Breast epithelium (tissue), 4 donors: ENCODE measurements at regions of chr6 and their contacts with region 1.

Region 1: GRCh38 chr6:15483060-15483459 is 179.8 kb downstream of the DTNBP1 start:
- DNase-seq: no peak
- H3K4me3 ChIP-seq: no peak overlapping the region
- H3K27ac ChIP-seq: no peak overlapping the region
- H3K4me1 ChIP-seq: no peaks in the 10 kb centered on the region
- H3K27me3 ChIP-seq: no peaks in the 10 kb centered on the region
- CTCF ChIP-seq: no peak
- POLR2A ChIP-seq: no peak

Region 2: GRCh38 chr6:15420959-15421438 is 62.1 kb before region 1 on chr6:
- intact Hi-C with region 1: no loop called
- DNase-seq: no peak
- H3K4me3 ChIP-seq: no peak overlapping the region
- H3K27ac ChIP-seq: no peak overlapping the region
- H3K4me1 ChIP-seq: no peaks in the 10 kb centered on the region
- H3K27me3 ChIP-seq: no peaks in the 10 kb centered on the region
- CTCF ChIP-seq: no peak
- POLR2A ChIP-seq: no peak

Region 3: GRCh38 chr6:15493437-15494168 is 10.5 kb after region 1 on chr6:
- intact Hi-C with region 1: loop called (anchors 1 kb)
- DNase-seq: no peak
- H3K4me3 ChIP-seq: no peak overlapping the region
- H3K27ac ChIP-seq: no peak overlapping the region
- H3K4me1 ChIP-seq: peaks cover 0 to 2% of the 10 kb centered on the region in 2 donors
- H3K27me3 ChIP-seq: no peaks in the 10 kb centered on the region
- CTCF ChIP-seq: no peak
- POLR2A ChIP-seq: no peak